Naive thymus-derived CD4-positive, alpha-beta T cell (primary cell): ENCODE measurements at regions of chr14 and their contacts with region 1.

Region 1: DNA sequence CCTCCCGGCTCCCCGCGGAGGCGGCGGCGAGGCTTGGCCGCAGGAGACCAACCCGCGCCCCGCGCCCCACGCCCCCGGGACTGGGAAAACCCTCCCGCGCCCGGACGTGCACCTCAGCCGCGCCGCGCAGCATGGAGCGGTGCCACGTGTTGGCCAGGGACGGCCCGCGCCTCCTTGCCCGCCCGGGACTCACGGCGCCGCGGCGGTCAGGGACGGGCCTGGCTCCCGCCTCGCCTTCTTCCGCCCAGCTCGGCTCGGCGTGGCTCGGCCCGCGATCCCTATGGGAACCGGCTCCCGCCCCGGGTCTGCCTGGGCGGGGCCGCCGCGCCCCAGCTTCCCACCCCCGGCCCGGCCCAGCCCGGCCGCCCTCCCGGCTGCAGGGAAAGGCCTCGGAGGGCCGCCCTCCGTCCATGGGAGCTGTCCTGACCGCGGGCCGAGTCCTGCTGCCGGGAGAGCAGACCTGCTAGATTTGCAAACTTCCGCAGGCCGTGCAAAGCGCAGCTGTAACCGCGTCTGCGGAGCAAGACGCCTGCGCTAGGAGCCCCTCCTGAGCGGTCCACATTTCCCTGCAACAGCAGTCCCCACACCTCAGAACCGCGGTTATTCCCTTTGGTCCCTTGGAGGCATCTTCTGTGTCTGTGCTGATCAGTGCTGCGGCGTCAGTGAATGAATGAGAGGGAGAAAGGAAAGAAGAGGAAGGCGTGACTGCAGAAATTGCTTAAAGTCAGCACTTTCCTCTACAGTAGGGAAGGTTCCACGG is at the start of gene CDKL1:
- DNase-seq: peak; percentile 9 to 74 (median 17)
- ATAC-seq: peak; percentile 78
- H3K4me3 ChIP-seq: peak within 1 kb of the TSS; percentile 78
- H3K4me3 Mint-ChIP-seq: peak within 1 kb of the TSS; percentile 83 to 95 (median 89)
- H3K27ac ChIP-seq: no peak within 1 kb of the TSS
- H3K27ac Mint-ChIP-seq: peak within 1 kb of the TSS in 8 of 9 donors; percentile 14 to 80 (median 44)
- H3K4me1 ChIP-seq: no peaks in the 10 kb centered on the region
- H3K4me1 Mint-ChIP-seq: peaks cover 11 to 24% (median 12%) of the 10 kb centered on the region in 7 donors
- H3K27me3 ChIP-seq: no peaks in the 10 kb centered on the region
- H3K27me3 Mint-ChIP-seq: peaks cover 0 to 24% (median 6%) of the 10 kb centered on the region in 5 donors
- total RNA-seq, gene CDKL1: 2.6 to 14.8 (median 4.9) TPM

Region 2: DNA sequence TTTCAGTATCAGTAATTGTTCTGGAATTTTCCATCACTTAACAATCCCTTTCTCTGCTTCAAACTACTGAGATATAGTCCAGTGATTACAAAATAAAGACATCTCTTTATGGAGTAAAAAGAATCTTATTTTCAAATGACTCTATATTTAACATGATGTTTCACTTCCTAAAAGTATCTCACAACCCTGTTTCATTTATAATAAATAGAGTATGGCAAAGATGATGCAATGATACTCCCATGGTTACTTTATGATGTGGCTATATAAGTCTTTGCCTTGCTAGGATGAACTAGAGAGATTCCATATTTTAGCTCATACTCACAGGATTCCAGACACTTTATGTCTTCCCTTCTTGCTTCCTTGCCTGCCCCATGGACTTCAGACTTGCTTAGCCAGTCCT is 1767.9 kb before region 1 on chr14:
- CTCF ChIA-PET with region 1: no interaction called
- POLR2A ChIA-PET with region 1: no interaction called
- intact Hi-C with region 1: no loop called
- DNase-seq: no peak
- ATAC-seq: no peak
- H3K4me3 ChIP-seq: no peak overlapping the region
- H3K4me3 Mint-ChIP-seq: no peak overlapping the region
- H3K27ac ChIP-seq: no peak overlapping the region
- H3K27ac Mint-ChIP-seq: no peak overlapping the region
- H3K4me1 ChIP-seq: no peaks in the 10 kb centered on the region
- H3K4me1 Mint-ChIP-seq: no peaks in the 10 kb centered on the region
- H3K27me3 ChIP-seq: no peaks in the 10 kb centered on the region
- H3K27me3 Mint-ChIP-seq: no peaks in the 10 kb centered on the region

Region 3: DNA sequence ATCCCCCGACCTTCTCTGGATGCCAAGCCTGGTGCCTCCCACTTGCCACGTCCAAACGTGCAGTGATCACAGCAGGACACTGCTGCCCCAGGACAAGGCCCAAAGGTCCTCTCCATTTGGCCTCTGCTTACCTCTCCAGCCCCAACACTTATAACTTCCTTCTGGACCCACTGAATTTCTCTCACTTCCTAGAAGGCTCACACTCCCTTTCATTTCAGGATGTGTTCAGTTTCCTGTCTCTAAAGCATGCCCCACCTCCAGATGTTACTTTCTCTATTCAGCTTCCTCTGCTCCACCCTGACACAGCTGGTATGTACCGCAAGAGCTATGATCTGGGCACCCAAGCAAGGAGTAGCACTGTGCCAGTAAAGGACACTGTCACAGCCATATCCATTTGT is 33.1 kb before region 1 on chr14:
- CTCF ChIA-PET with region 1: no interaction called
- POLR2A ChIA-PET with region 1: no interaction called
- intact Hi-C with region 1: loop called (anchors 1 kb)
- DNase-seq: peak in 8 of 9 donors; percentile 36 to 68 (median 57)
- ATAC-seq: peak; percentile 94
- H3K4me3 ChIP-seq: peak overlapping the region; percentile 67
- H3K4me3 Mint-ChIP-seq: peak overlapping the region; percentile 80 to 94 (median 90)
- H3K27ac ChIP-seq: peak overlapping the region; percentile 72
- H3K27ac Mint-ChIP-seq: peak overlapping the region; percentile 90 to 95 (median 93)
- H3K4me1 ChIP-seq: peaks cover 10 to 12% of the 10 kb centered on the region in 2 donors
- H3K4me1 Mint-ChIP-seq: peaks cover 23 to 58% (median 43%) of the 10 kb centered on the region in 7 donors
- H3K27me3 ChIP-seq: no peaks in the 10 kb centered on the region
- H3K27me3 Mint-ChIP-seq: no peaks in the 10 kb centered on the region